PC-9 (cell line): ENCODE measurements at regions of chr18 and their contacts with region 1.

Region 1: DNA sequence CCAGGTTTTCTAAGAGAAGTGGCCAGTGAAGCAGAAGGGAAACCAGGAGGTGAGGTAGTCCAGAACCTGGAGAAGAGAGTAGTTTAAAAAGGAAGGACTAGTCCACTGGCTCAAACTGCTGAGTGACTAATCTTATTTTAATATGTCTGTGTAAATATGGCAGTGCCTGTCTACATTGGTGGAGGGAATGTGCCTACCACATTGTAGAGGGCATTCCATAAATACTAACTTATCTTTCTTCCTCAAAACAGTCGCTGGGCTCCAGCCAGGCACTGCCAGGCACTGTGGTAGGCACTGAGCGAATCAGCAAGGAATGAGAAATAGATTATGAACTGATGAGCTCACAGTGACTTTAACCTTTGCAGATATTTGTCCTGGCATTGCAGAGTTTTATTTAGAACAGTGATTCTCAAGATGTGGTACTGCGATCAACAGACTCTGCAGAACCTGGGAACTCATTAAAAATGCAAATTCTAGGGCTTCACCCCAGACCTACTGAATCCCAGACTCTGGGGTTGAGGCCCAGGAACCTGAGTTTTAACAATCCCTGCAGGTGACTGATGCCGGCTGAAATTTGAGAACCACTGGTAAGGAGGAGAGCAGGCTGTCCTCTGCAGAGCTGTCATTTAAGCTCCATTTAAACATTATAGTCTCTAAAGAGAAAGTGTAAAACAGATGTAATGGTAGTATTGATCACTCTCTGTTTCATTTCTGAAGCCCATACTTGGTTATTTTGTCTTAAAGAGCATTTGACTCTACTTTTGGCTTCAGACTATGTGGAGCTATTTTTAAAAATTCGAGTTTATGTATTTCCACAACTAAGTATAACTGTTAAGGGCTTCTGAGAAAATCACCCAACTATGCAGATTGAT is 487.9 kb downstream of the DLGAP1 start:
- DNase-seq: peak in 1 of 2 experiments; percentile 41
- H3K4me3 ChIP-seq: no peak overlapping the region
- H3K27ac ChIP-seq: no peak overlapping the region
- H3K4me1 ChIP-seq: peaks cover 12% of the 10 kb centered on the region
- H3K27me3 ChIP-seq: no peaks in the 10 kb centered on the region
- CTCF ChIP-seq: no peak

Region 2: GRCh38 chr18:3547891-3548615 is 419.2 kb before region 1 on chr18:
- CTCF ChIA-PET with region 1: no interaction called
- POLR2A ChIA-PET with region 1: interaction called, 10 read pairs
- intact Hi-C with region 1: no loop called
- DNase-seq: no peak
- H3K4me3 ChIP-seq: no peak overlapping the region
- H3K27ac ChIP-seq: no peak overlapping the region
- H3K4me1 ChIP-seq: no peaks in the 10 kb centered on the region
- H3K27me3 ChIP-seq: no peaks in the 10 kb centered on the region
- CTCF ChIP-seq: no peak

Region 3: DNA sequence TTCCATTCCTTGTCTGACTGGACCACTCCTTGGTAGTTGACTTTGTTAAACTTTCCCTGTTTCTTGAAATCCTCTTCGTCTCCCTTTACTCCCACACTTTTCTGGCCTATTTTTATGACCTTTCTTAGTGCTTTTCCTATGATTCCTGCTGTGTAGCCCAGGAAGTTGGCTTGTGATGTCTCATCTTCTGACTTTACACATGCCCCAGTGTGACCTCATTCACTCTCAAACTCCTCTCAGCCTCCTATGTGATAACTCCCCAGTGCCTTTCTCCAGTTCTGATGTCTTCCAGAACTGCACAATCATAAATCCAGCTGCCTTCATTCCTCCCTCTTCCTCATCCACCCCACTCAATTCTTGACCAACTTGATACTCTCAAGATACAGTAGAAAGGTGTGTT is 109.7 kb before region 1 on chr18:
- CTCF ChIA-PET with region 1: no interaction called
- POLR2A ChIA-PET with region 1: no interaction called
- intact Hi-C with region 1: no loop called
- DNase-seq: no peak
- H3K4me3 ChIP-seq: no peak overlapping the region
- H3K27ac ChIP-seq: no peak overlapping the region
- H3K4me1 ChIP-seq: no peaks in the 10 kb centered on the region
- H3K27me3 ChIP-seq: no peaks in the 10 kb centered on the region
- CTCF ChIP-seq: no peak